ENCODE measurements at regions of chr2 and their contacts with region 1.

Region 1: DNA sequence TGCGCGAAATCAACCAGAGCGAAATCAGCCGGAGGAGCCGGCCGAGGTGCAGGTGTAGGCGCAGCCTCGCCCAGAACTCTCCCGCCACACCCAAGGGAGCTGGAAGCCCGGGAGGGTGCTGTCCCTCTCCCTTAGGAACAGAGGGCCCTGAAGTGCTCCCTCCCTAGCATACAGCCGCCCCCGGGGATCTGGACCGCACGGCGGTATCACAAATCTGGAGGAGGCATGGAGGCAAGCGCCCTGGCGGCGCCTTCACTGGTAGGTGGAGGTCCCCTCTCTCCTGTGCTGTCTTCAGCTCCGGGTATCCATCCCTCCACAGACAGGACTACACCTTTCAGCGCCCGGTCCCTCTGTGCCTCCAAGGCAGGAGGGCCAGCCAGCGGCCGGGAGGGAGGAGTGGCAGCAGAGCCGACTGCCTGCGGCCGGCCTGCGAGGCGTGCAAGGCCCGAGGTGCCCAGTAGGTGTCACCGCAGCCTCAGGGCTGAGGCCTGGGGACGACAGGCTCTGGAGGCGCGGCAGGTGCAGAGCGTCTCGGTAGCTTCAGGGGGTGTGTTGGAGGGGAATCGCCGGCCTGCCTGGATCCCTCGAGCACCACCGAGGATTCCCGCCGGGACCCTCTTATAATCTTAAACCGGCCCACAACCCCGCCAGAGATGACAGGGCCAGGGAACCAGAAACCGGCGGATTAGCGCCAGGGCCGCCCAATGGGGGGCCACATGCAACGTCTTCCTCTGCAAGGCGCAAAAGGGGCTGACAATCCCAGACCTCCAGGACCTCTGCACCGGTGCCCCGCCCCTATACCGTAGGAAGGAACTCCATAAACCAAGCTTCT is 2.8 kb downstream of the IHH start:
- DNase-seq: peak; percentile 72
- ATAC-seq: peak; percentile 99
- H3K4me3 Mint-ChIP-seq: peak overlapping the region; percentile 57
- H3K27ac Mint-ChIP-seq: no peak overlapping the region
- H3K4me1 Mint-ChIP-seq: peaks cover 32% of the 10 kb centered on the region
- H3K27me3 Mint-ChIP-seq: peaks cover 58% of the 10 kb centered on the region
- CTCF ChIP-seq: peak; percentile 47

Region 2: GRCh38 chr2:217899231-217900009 is 1158.5 kb before region 1 on chr2:
- CTCF ChIA-PET with region 1: no interaction called
- POLR2A ChIA-PET with region 1: no interaction called
- intact Hi-C with region 1: no loop called
- DNase-seq: no peak
- ATAC-seq: no peak
- H3K4me3 Mint-ChIP-seq: no peak overlapping the region
- H3K27ac Mint-ChIP-seq: no peak overlapping the region
- H3K4me1 Mint-ChIP-seq: peaks cover 2% of the 10 kb centered on the region
- H3K27me3 Mint-ChIP-seq: peaks cover 9% of the 10 kb centered on the region
- CTCF ChIP-seq: no peak

Region 3: DNA sequence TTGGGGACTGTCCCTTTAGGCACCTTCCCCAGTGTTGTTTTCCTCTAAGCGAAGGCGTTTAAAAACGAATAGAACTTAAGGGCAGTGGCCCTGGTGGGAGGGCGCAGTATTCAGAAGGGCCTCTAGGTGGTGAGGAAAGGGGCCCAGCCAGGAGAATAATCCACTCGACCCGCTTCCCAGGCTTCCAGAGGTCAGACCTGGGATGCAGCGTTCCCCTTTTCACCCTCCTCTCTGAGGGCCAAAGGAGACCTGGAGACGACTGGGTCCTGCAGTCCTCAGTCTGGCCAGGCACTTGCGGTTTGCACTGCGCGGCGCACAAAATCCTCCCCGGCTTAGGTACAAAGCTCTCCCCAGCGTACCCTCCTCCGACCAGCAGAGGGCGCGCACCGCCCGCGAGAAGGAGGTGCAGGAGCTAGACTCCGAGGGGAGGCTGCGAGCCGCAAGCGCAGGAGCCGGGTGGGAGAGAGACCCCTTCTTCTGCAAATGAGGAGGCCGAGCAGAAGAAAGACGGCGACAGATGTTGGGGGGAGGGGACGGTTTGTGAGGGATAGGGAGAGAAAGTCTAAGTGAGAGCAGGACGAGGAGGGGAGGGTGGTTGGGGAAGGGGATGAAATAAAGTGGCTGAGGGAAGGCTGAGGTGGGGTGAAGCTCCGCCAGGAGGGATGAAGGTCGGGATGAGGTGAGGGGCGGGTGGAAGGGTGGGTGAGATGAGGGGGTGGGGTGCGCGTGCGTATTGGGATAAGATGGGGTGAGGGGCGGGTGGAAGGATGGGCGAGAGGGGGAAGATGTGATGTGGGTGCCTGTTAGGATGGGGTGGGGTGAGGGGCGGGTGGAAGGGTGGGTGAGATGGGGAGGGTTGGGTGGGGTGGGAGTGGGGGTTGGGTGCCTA is 77.8 kb before region 1 on chr2:
- CTCF ChIA-PET with region 1: interaction called, 6 read pairs
- POLR2A ChIA-PET with region 1: no interaction called
- intact Hi-C with region 1: loop called (anchors 5 kb)
- DNase-seq: peak; percentile 78
- ATAC-seq: peak; percentile 93
- H3K4me3 Mint-ChIP-seq: peak overlapping the region; percentile 71
- H3K27ac Mint-ChIP-seq: no peak overlapping the region
- H3K4me1 Mint-ChIP-seq: peaks cover 28% of the 10 kb centered on the region
- H3K27me3 Mint-ChIP-seq: peaks cover 56% of the 10 kb centered on the region
- CTCF ChIP-seq: peak; percentile 78

Region 4: GRCh38 chr2:219029829-219030165 is 28.1 kb before region 1 on chr2:
- CTCF ChIA-PET with region 1: no interaction called
- POLR2A ChIA-PET with region 1: no interaction called
- intact Hi-C with region 1: loop called (anchors 1 kb)
- DNase-seq: peak; percentile 65
- ATAC-seq: peak; percentile 87
- H3K4me3 Mint-ChIP-seq: no peak overlapping the region
- H3K27ac Mint-ChIP-seq: no peak overlapping the region
- H3K4me1 Mint-ChIP-seq: no peaks in the 10 kb centered on the region
- H3K27me3 Mint-ChIP-seq: peaks cover 35% of the 10 kb centered on the region
- CTCF ChIP-seq: no peak

Region 5: GRCh38 chr2:219124381-219125110 is 66.6 kb after region 1 on chr2:
- CTCF ChIA-PET with region 1: interaction called, 39 read pairs
- POLR2A ChIA-PET with region 1: no interaction called
- intact Hi-C with region 1: loop called (anchors 1 kb)
- DNase-seq: no peak
- ATAC-seq: no peak
- H3K4me3 Mint-ChIP-seq: no peak overlapping the region
- H3K27ac Mint-ChIP-seq: no peak overlapping the region
- H3K4me1 Mint-ChIP-seq: no peaks in the 10 kb centered on the region
- H3K27me3 Mint-ChIP-seq: no peaks in the 10 kb centered on the region
- CTCF ChIP-seq: no peak

Region 6: GRCh38 chr2:219206442-219207253 is 148.7 kb after region 1 on chr2 and contains the start of gene ZFAND2B:
- CTCF ChIA-PET with region 1: no interaction called
- POLR2A ChIA-PET with region 1: no interaction called
- intact Hi-C with region 1: loop called (anchors 2 kb)
- DNase-seq: peak; percentile 99
- ATAC-seq: peak; percentile 93
- H3K4me3 Mint-ChIP-seq: peak within 1 kb of the TSS; percentile 88
- H3K27ac Mint-ChIP-seq: peak within 1 kb of the TSS; percentile 95
- H3K4me1 Mint-ChIP-seq: peaks cover 26% of the 10 kb centered on the region
- H3K27me3 Mint-ChIP-seq: no peaks in the 10 kb centered on the region
- CTCF ChIP-seq: no peak
- total RNA-seq, gene ZFAND2B: 39.9 and 47.2 TPM in 2 replicates

Region 7: DNA sequence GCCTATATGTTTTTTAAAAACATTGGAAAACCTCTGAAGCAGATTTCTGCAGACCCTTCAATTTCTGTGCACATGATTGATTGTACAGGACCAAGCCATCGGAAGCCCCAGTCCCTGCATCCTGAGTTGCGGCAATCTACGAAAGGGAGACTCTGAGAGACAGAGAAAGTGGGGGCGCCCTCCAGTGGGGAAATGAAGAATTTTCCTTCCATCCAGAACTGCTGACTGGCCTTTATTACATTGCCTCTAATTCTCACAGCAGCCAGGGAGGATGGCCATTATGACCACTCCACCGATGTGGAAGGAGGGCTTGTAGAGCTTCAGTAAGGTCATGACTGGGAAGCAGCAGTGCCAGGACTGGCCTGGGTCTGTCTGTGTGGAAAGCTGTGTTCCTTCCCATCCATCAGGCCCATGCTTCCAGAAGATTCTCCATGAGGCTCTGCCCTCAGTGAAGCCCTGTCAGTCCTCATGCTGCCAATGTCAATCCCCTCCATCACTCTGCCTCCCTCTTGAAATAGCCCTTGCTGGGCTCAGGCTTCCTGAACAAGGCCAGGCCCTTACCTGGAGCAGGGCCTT is 294.6 kb after region 1 on chr2:
- CTCF ChIA-PET with region 1: interaction called, 3 read pairs
- POLR2A ChIA-PET with region 1: no interaction called
- intact Hi-C with region 1: loop called (anchors 1 kb)
- DNase-seq: no peak
- ATAC-seq: peak; percentile 56
- H3K4me3 Mint-ChIP-seq: no peak overlapping the region
- H3K27ac Mint-ChIP-seq: no peak overlapping the region
- H3K4me1 Mint-ChIP-seq: no peaks in the 10 kb centered on the region
- H3K27me3 Mint-ChIP-seq: peaks cover 52% of the 10 kb centered on the region
- CTCF ChIP-seq: no peak

Measured in activated B cell treated with CpG ODN at 0.5 μM for 24 hours (primary cell).